HEK293 (cell line): ENCODE measurements at regions of chr11 and their contacts with region 1.

Region 1: DNA sequence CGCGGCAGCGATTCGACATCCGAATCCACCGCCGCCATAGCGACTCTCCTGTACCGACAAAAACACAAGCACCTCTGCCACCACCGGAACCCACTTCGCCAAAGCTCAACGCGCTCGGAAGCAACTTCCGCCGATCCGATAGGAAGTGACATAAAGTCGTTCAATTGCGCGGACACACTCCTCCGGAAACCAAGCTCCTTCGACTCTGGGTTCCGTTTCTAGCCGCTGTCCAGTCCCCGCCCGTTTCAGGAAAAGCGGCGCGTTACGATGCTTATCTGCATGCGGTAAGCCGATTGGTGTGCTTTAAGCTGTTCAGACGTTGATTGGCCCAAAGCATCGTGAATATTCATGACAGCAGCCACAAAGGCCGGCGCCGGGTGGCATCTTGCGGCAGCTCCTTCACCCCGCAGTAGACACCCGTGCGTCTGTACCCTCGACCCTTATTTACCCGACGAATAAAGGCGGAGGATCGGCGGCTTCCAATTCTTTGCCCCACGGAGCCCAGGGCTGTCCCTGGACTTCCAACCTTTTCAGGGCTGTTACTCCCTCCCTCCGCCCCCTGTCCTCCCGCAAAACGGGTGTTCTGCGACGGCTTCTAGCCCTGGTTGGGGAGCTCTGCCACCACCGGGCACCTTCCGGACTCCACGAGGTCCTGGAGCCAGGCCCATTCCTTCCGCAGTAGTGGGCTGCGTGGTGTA is at the start of gene TUT1:
- H3K4me3 ChIP-seq: peak within 1 kb of the TSS; percentile 50
- H3K27ac ChIP-seq: peak within 1 kb of the TSS; percentile 73
- H3K4me1 ChIP-seq: no peaks in the 10 kb centered on the region
- CTCF ChIP-seq: no peak

Region 2: DNA sequence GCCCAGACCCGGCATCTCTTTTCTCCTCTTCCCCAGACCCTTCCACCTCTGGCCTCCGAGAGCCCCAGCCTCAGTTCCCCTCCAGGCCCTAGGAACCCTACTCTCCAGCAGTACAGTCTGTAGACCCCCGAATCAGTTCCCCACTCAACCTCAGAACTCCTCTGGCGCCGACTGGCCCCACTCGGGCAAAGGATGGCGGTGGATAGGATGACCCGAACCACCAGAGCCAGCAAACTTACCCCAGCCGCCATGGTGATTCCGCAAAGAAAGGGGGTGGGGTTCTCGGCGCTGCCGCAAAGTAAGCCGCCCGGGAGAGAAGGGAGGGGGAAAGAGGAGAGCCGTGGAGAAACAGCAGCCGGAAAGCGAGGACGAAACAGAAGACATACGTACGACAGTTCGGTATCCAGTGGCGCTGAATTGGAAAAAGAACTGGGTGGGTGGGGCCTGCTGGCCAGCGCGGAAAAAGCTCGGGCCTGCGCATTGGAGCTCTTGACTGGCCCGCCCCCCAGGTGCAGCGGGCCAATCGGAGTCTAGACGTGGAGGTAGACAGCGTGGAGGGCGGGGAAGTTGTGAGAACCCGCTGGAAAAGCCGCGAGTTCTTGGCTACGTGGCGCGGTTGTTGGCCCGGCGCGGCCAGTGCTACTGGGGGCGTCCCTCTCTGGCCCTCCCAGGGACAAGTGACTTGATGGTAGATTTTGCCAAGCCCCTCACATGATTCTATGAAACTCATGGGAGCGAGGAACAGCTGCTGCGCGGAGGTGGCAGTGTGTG is 17.8 kb before region 1 on chr11 and contains the start of gene EEF1G:
- CTCF ChIA-PET with region 1: interaction called, 5 read pairs
- POLR2A ChIA-PET with region 1: interaction called, 113 read pairs
- H3K4me3 ChIP-seq: peak within 1 kb of the TSS; percentile 90
- H3K27ac ChIP-seq: peak within 1 kb of the TSS; percentile 99
- H3K4me1 ChIP-seq: no peaks in the 10 kb centered on the region
- CTCF ChIP-seq: no peak

Region 3: GRCh38 chr11:62645956-62646824 is 54.6 kb after region 1 on chr11 and contains the start of gene GANAB:
- CTCF ChIA-PET with region 1: interaction called, 5 read pairs
- POLR2A ChIA-PET with region 1: interaction called, 18 read pairs
- H3K4me3 ChIP-seq: peak within 1 kb of the TSS; percentile 86
- H3K27ac ChIP-seq: peak within 1 kb of the TSS; percentile 83
- H3K4me1 ChIP-seq: peaks cover 3% of the 10 kb centered on the region; the same call in 1 of the 2 replicates
- CTCF ChIP-seq: 0 out of 2 replicates have a peak, but pooled peaks have one; percentile 12

Region 4: DNA sequence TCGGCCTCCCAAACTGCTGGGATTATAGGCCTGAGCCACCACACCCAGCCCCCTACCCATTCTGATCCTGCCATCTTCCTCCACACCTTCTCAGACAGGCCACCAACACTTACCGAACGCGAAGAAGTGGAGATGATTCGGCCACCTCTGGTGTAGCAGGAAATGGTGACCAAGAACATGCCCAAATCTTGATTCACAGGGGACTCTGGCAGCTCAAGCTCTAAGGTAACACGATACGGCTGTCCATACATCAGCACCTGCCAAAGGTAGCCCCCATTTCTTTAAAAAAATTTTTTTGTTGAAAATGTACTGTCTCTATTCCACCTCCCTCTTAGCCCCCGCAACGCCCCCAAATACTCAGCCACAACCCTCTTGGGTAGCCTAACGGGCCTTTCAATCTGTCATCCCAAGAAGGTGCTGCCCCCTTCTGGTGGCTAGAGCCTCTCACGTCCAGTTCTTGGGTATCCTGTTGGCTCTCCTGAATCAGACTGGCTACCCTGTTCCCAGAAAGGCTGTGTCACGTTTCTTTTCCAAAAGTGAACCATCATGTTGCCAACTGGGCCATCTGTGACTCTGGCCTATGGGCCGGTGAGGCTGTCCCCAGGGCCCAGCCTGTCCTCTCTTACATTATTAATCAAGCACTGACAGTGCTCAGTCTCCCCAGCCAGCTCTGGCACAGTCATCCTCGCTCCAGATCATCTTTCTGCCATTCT is 103.0 kb after region 1 on chr11:
- CTCF ChIA-PET with region 1: interaction called, 14 read pairs
- POLR2A ChIA-PET with region 1: interaction called, 9 read pairs
- H3K4me3 ChIP-seq: no peak overlapping the region
- H3K27ac ChIP-seq: no peak overlapping the region
- H3K4me1 ChIP-seq: no peaks in the 10 kb centered on the region
- CTCF ChIP-seq: peak; percentile 11; the same call in 1 of the 2 replicates

Region 5: DNA sequence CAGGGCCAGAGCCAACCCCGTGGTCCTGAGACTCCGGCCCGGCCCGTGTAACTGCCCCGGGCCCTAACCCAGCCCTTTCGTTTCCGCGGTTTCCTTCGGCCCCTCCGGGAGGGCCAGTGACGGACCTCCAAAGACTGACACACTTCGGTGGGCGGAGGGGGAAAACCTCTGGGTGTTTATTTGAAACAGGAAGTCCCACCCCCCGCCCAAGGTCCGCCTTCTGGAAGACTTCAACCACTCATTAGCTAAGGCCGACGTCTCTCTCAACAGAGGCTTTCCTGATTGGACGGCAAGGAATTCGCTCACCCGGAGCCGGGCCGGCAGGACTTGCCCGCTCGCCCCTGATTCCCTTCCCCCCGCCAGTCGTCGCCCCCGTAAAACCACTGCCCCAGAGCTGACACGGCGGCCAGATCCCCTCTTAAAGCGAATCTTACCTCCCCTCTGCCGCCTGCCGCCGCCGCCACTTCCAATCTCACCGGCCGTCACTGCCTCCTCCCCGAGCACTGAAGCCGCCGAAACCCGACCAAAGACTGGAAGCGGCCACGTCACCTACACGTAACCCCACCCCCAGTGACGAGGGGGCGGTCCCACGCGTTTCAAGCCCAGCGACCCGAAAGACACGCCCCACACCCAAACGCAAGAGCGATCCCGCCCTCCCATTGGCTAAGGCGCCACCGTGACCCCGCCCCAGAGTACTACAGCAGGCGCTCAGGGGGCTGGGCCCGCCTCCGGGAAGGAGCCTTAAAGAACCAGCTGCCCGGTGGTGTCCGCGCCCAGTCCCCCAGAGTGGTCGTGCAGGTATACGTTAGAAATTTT is 240.1 kb after region 1 on chr11 and contains the start of gene STX5:
- CTCF ChIA-PET with region 1: no interaction called
- POLR2A ChIA-PET with region 1: interaction called, 10 read pairs
- H3K4me3 ChIP-seq: peak within 1 kb of the TSS; percentile 87
- H3K27ac ChIP-seq: peak within 1 kb of the TSS; percentile 88
- H3K4me1 ChIP-seq: peaks cover 2% of the 10 kb centered on the region; the same call in 1 of the 2 replicates
- CTCF ChIP-seq: no peak